Naive thymus-derived CD4-positive, alpha-beta T cell (primary cell): ENCODE measurements at regions of chr2 and their contacts with region 1.

Region 1: DNA sequence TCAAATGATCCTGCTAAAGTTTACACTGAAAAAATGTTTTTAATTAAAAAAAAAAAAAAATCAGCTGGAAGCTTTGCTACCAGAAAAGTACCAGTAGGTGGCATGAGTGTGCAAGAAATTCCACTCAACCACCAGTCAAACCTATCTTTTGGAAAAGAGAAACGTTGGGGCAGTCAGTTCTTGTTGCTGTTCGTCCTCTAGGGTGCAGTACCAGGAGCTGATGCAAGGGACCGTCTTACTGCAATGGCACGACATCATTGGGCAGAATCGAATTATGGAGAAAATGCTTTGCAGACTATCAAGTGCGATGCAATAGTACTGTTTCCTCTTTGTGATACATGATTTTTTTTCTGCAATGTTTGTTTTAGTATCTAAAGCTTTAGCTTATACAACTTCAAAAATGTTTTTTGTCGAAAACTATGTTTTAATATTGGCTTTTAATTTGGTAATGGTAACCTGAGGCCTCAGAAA is 18.3 kb downstream of the YPEL5 start:
- DNase-seq: peak in 8 of 9 donors; percentile 41 to 89 (median 84)
- ATAC-seq: peak; percentile 75
- H3K4me3 ChIP-seq: no peak overlapping the region
- H3K4me3 Mint-ChIP-seq: peak overlapping the region in 1 of 10 donors; percentile 37
- H3K27ac ChIP-seq: no peak overlapping the region
- H3K27ac Mint-ChIP-seq: peak overlapping the region in 4 of 9 donors; percentile 19 to 76 (median 50)
- H3K4me1 ChIP-seq: peaks cover 0 to 5% of the 10 kb centered on the region in 2 donors
- H3K4me1 Mint-ChIP-seq: peaks cover 3 to 12% (median 6%) of the 10 kb centered on the region in 7 donors
- H3K27me3 ChIP-seq: no peaks in the 10 kb centered on the region
- H3K27me3 Mint-ChIP-seq: no peaks in the 10 kb centered on the region

Region 2: DNA sequence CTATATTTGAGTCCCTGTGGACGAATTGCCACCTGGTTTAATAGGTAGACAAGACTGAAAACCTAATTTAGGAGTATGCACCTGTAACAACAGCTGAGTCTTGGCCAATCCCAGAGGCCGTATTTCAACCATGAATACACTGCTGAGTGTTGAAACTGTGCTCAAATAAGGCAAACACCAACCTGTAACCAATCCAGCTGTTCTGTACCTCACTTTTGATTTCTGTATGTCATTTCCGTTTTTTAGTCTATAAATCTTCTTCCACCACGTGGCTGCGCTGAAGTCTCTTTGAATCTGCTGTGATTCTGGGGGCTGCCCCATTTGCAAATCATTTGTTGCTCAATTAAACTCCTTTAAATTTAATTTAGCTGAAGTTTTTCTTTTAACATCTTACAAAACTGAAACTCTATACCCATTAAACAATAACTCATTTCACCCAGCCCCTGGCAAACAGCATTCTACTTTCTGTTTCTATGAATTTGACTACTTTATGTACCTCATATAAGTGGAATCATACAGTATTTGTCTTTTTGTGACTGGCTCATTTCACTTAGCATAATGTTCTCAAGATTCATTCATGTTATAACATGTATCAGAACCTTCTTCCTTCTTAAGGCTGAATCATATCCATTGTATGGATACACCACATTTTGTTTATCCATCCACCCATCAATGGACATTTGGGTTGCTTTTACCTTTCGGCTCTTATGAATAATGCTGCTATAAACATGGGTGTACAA is 25.8 kb before region 1 on chr2:
- CTCF ChIA-PET with region 1: interaction called, 4 read pairs
- POLR2A ChIA-PET with region 1: interaction called, 5 read pairs
- intact Hi-C with region 1: loop called in 1 of 2 experiments (anchors 2 kb)
- DNase-seq: peak in 7 of 9 donors; percentile 45 to 71 (median 63)
- ATAC-seq: peak; percentile 77
- H3K4me3 ChIP-seq: no peak overlapping the region
- H3K4me3 Mint-ChIP-seq: peak overlapping the region in 8 of 10 donors; percentile 1 to 59 (median 45)
- H3K27ac ChIP-seq: peak overlapping the region; percentile 42
- H3K27ac Mint-ChIP-seq: peak overlapping the region; percentile 57 to 83 (median 66)
- H3K4me1 ChIP-seq: peaks cover 0 to 10% of the 10 kb centered on the region in 2 donors
- H3K4me1 Mint-ChIP-seq: peaks cover 12 to 32% (median 21%) of the 10 kb centered on the region in 7 donors
- H3K27me3 ChIP-seq: no peaks in the 10 kb centered on the region
- H3K27me3 Mint-ChIP-seq: peaks cover 0 to 13% (median 0%) of the 10 kb centered on the region in 5 donors

Region 3: DNA sequence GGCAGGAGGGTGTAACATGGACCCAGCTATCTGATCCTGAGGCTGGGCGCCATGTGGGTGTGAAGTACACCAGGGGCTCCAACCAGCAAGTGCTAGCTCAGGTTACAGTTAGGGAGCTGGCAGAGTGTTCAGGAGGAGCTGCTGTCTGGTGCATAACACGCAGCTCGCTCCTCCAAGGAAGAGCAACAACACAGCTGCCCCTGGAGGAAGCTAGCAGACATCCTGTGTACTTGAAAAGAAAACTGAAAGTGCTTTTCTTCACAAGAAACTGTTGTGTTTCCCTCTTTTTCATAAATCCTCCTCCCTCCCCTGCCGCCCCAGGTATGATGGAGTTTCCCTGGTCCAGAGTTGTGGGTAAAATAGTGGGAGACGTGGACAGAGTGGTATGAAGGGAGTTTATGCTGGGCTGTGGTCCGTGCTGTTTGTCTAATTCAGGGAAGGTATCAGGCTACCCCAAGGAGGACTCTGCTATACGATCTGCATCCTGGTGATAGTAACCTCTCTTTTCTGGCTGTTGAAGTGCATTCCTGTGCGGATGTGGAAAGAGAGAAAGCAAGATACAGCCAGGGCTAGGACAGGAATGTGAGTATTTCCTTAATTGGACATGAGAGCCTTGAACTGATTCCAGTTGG is 60.2 kb after region 1 on chr2:
- CTCF ChIA-PET with region 1: interaction called, 14 read pairs
- POLR2A ChIA-PET with region 1: interaction called, 4 read pairs
- intact Hi-C with region 1: loop called (anchors 1 to 2 kb)
- DNase-seq: peak in 8 of 9 donors; percentile 46 to 77 (median 72)
- ATAC-seq: peak; percentile 81
- H3K4me3 ChIP-seq: peak overlapping the region; percentile 67
- H3K4me3 Mint-ChIP-seq: peak overlapping the region; percentile 87 to 99 (median 94)
- H3K27ac ChIP-seq: peak overlapping the region; percentile 95
- H3K27ac Mint-ChIP-seq: peak overlapping the region; percentile 95 to 100 (median 100)
- H3K4me1 ChIP-seq: peaks cover 63 to 67% of the 10 kb centered on the region in 2 donors
- H3K4me1 Mint-ChIP-seq: peaks cover 48 to 86% (median 76%) of the 10 kb centered on the region in 7 donors
- H3K27me3 ChIP-seq: no peaks in the 10 kb centered on the region
- H3K27me3 Mint-ChIP-seq: peaks cover 0 to 3% (median 0%) of the 10 kb centered on the region in 5 donors

Region 4: GRCh38 chr2:30472326-30472725 is 307.2 kb after region 1 on chr2:
- CTCF ChIA-PET with region 1: interaction called, 57 read pairs
- POLR2A ChIA-PET with region 1: interaction called, 6 read pairs
- intact Hi-C with region 1: loop called (anchors 1 kb)
- DNase-seq: peak in 1 of 9 donors; percentile 14
- ATAC-seq: no peak
- H3K4me3 ChIP-seq: no peak overlapping the region
- H3K4me3 Mint-ChIP-seq: no peak overlapping the region
- H3K27ac ChIP-seq: no peak overlapping the region
- H3K27ac Mint-ChIP-seq: peak overlapping the region in 2 of 9 donors; percentile 0 to 25
- H3K4me1 ChIP-seq: peaks cover 0 to 20% of the 10 kb centered on the region in 2 donors
- H3K4me1 Mint-ChIP-seq: peaks cover 14 to 78% (median 40%) of the 10 kb centered on the region in 7 donors
- H3K27me3 ChIP-seq: no peaks in the 10 kb centered on the region
- H3K27me3 Mint-ChIP-seq: no peaks in the 10 kb centered on the region

Region 5: DNA sequence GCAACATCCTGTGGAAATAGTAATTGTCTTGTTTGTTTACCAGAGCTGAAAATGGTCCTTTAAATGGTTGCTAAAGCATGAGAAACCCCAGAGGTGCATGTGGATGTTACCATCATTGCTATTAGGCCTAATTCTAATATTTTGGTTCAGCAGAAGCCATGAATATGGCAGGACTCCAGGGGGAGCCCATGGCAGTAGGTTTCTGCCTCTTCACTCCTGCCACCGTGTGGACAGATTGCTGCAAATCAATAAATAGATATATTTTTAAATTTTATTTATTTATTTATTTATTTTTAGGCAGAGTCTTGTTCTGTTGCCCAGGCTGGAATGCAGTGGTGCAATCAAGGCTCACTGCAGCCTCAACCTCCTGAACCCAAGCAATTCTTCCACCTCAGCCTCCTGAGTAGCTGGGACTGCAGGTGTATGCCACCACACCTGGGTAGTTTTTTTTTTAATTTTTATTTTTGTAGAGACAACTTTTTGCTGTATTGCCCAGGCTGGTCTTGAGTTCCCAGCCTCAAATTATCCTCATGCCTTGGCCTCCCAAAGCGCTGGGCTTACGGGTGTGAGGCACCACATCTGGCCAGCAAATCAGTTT is 697.1 kb after region 1 on chr2:
- CTCF ChIA-PET with region 1: no interaction called
- POLR2A ChIA-PET with region 1: no interaction called
- intact Hi-C with region 1: loop called in 1 of 2 experiments (anchors 10 kb)
- DNase-seq: peak in 6 of 9 donors; percentile 2 to 40 (median 26)
- ATAC-seq: peak; percentile 73
- H3K4me3 ChIP-seq: no peak overlapping the region
- H3K4me3 Mint-ChIP-seq: no peak overlapping the region
- H3K27ac ChIP-seq: no peak overlapping the region
- H3K27ac Mint-ChIP-seq: no peak overlapping the region
- H3K4me1 ChIP-seq: no peaks in the 10 kb centered on the region
- H3K4me1 Mint-ChIP-seq: peaks cover 0 to 14% (median 2%) of the 10 kb centered on the region in 7 donors
- H3K27me3 ChIP-seq: no peaks in the 10 kb centered on the region
- H3K27me3 Mint-ChIP-seq: peaks cover 6 to 21% (median 11%) of the 10 kb centered on the region in 5 donors

Region 6: GRCh38 chr2:31333527-31334183 is 1168.6 kb after region 1 on chr2:
- CTCF ChIA-PET with region 1: interaction called, 10 read pairs
- POLR2A ChIA-PET with region 1: no interaction called
- intact Hi-C with region 1: loop called in 1 of 2 experiments (anchors 1 kb)
- DNase-seq: peak; percentile 31 to 74 (median 67)
- ATAC-seq: peak; percentile 81
- H3K4me3 ChIP-seq: no peak overlapping the region
- H3K4me3 Mint-ChIP-seq: no peak overlapping the region
- H3K27ac ChIP-seq: no peak overlapping the region
- H3K27ac Mint-ChIP-seq: no peak overlapping the region
- H3K4me1 ChIP-seq: no peaks in the 10 kb centered on the region
- H3K4me1 Mint-ChIP-seq: no peaks in the 10 kb centered on the region
- H3K27me3 ChIP-seq: no peaks in the 10 kb centered on the region
- H3K27me3 Mint-ChIP-seq: peaks cover 0 to 26% (median 5%) of the 10 kb centered on the region in 5 donors